Calu3 (cell line): ENCODE measurements at regions of chr7 and their contacts with region 1.

Region 1: DNA sequence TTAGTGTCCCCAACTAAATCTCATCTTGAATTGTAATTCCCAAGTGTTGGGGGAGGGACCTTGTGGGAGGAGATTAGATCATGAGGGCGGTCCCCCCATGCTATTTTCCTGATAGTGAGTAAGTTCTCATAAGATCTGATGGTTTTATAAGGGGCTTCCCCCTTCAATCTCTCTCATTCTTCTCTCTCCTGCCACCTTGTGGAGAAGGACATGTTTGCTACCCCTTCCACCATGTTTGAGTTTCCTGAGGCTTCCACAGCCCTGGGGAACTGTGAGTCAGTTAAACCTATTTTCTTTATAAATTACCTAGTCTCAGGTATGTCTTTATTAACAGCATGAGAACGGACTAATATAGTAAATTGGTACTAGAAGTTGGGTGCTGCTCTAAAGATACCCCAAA is 365.6 kb downstream of the ANKRD7 start:
- DNase-seq: peak; percentile 6
- H3K4me3 Mint-ChIP-seq: no peak overlapping the region
- H3K27ac Mint-ChIP-seq: no peak overlapping the region
- H3K4me1 Mint-ChIP-seq: peaks cover 8% of the 10 kb centered on the region
- H3K27me3 Mint-ChIP-seq: no peaks in the 10 kb centered on the region
- CTCF ChIP-seq: no peak

Region 2: GRCh38 chr7:118250860-118251494 is 339.1 kb before region 1 on chr7:
- CTCF ChIA-PET with region 1: no interaction called
- intact Hi-C with region 1: loop called (anchors 10 kb)
- DNase-seq: no peak
- H3K4me3 Mint-ChIP-seq: no peak overlapping the region
- H3K27ac Mint-ChIP-seq: no peak overlapping the region
- H3K4me1 Mint-ChIP-seq: no peaks in the 10 kb centered on the region
- H3K27me3 Mint-ChIP-seq: no peaks in the 10 kb centered on the region
- CTCF ChIP-seq: peak; percentile 32

Region 3: GRCh38 chr7:118777308-118777707 is 187.2 kb after region 1 on chr7:
- CTCF ChIA-PET with region 1: no interaction called
- intact Hi-C with region 1: no loop called
- DNase-seq: no peak
- H3K4me3 Mint-ChIP-seq: no peak overlapping the region
- H3K27ac Mint-ChIP-seq: no peak overlapping the region
- H3K4me1 Mint-ChIP-seq: no peaks in the 10 kb centered on the region
- H3K27me3 Mint-ChIP-seq: no peaks in the 10 kb centered on the region
- CTCF ChIP-seq: no peak